Activated CD4-positive, alpha-beta T cell treated with anti-CD3 and anti-CD28 coated beads for 36 hours (primary cell): ENCODE measurements at regions of chr9 and their contacts with region 1.

Region 1: GRCh38 chr9:34178520-34179212 is at the start of gene UBAP1:
- DNase-seq: peak; percentile 98
- ATAC-seq: peak; percentile 97
- H3K4me3 Mint-ChIP-seq: peak within 1 kb of the TSS; percentile 93
- H3K27ac Mint-ChIP-seq: peak within 1 kb of the TSS; percentile 96
- H3K4me1 Mint-ChIP-seq: peaks cover 20% of the 10 kb centered on the region
- H3K27me3 Mint-ChIP-seq: no peaks in the 10 kb centered on the region
- total RNA-seq, gene UBAP1: 29.5 to 43.3 TPM

Region 2: DNA sequence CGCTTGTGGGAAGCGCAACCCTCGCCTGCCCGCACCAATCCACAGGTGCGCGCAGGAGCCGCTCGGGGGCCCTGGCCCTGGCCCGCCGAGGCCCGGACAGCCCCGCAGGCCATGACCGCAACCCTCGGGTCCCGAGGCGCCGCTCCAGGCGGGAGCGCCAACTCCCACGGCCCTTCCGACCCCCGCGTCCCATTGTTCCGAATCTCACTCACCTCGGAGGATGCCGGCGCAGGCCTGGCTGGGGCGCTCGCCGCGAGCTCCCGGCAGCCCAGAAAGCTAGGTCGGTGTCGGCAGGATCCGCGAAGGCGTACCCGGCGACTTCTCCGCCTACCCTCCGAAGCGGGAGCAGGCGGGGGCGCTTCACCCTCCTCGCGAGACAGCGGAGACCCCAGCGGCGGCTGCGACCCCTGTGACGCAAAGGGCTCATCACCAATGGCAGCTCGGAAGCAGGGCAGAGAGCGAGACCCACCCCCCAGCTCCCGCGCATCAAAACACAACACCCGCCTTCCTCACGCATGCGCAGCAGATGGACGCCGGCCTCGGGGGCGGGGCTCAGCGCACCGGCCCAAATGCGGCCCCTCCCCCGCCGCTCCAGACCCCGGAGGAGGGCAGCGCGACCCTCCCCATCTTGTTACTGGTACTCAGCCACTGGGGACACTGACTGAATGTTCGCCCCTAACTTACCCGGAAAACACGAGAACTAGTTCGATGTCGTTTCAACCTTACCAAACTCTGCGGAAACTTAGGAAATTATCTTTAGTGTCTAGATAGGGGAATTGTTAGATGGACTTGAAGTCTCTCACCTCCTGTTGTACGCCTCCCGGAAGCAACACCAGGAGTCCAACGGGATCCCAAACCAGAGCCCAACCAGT is 1627.9 kb before region 1 on chr9:
- CTCF ChIA-PET with region 1: no interaction called
- POLR2A ChIA-PET with region 1: no interaction called
- intact Hi-C with region 1: loop called in 1 of 2 experiments (anchors 10 kb)
- DNase-seq: peak; percentile 95
- ATAC-seq: peak; percentile 74
- H3K4me3 Mint-ChIP-seq: peak overlapping the region; percentile 96
- H3K27ac Mint-ChIP-seq: peak overlapping the region; percentile 99
- H3K4me1 Mint-ChIP-seq: peaks cover 47% of the 10 kb centered on the region
- H3K27me3 Mint-ChIP-seq: no peaks in the 10 kb centered on the region

Region 3: DNA sequence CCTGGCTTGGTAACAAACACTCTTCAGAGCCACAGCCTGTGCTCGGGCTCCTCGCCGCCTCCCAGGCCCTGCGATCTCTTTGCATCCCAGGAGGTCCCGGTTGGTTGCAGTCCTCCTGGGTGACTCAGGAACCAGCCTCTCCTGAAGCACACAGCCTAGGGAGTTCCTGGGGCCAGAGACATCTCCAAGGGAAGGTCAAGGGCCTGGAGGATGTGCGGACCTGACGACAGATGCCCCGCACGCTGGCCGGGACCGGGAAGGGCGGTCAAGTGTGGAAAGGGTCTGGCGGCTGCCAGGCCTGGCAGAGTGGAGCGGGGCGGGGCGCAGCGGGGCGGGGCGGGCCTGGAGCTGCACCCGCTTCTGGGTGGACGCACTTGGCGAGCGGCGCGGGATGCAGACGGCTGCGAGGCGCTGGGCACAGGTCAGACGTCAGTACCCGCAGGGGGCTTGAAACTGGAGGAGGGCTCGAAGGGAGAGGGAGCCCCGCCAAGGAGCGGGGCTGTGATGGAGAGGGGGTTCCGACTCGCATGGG is 428.3 kb before region 1 on chr9:
- CTCF ChIA-PET with region 1: no interaction called
- POLR2A ChIA-PET with region 1: no interaction called
- intact Hi-C with region 1: no loop called
- DNase-seq: peak; percentile 10
- ATAC-seq: no peak
- H3K4me3 Mint-ChIP-seq: no peak overlapping the region
- H3K27ac Mint-ChIP-seq: no peak overlapping the region
- H3K4me1 Mint-ChIP-seq: peaks cover 18% of the 10 kb centered on the region
- H3K27me3 Mint-ChIP-seq: peaks cover 61% of the 10 kb centered on the region

Region 4: DNA sequence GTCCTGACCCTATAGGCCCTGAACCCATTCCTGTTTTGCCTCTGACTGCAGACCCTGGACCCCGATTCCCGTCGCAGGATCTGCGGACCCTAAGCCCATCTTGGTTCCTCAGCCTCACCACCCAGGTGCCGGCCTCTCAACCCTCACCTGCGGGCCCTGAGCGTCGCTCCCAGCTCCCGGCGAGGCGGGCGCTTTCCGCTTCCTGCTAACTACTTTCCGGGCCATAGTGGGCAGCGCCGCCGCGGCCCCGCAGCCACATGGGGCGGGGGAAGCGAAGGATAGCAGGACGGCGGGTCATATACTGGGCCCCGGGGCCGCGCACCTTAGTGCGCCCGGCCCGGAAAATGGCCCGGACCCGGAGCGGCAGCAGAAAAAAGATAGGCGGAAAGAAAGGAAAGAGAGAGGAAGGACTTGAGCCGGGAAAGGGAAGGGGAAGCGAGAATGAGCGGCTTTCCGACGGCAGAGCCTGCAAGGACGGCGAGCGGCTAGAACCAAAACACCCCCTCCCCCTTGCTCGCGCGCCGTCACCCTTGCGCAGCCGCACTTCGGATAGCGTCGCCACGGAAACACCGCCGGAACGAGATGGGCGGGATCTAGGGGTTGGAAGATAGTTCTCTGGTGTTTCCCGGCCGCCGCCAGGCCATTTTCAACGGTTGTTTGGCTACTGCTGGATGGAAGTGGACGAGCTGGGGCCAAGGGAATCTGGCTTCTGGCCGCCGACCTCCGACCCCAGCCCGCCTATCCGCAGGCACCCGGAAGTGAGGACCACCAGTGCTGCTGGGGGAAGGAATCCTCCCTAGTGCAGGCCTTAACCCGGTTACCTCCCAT is 52.2 kb before region 1 on chr9 and contains the start of gene DCAF12:
- CTCF ChIA-PET with region 1: interaction called, 3 read pairs
- POLR2A ChIA-PET with region 1: interaction called, 7 read pairs
- intact Hi-C with region 1: loop called (anchors 1 kb)
- DNase-seq: peak; percentile 95
- ATAC-seq: peak; percentile 97
- H3K4me3 Mint-ChIP-seq: peak within 1 kb of the TSS; percentile 95
- H3K27ac Mint-ChIP-seq: peak within 1 kb of the TSS; percentile 98
- H3K4me1 Mint-ChIP-seq: peaks cover 40% of the 10 kb centered on the region
- H3K27me3 Mint-ChIP-seq: no peaks in the 10 kb centered on the region
- total RNA-seq, gene DCAF12: 34.6 to 35.0 TPM

Region 5: GRCh38 chr9:34206561-34206960 is 27.9 kb after region 1 on chr9:
- CTCF ChIA-PET with region 1: no interaction called
- POLR2A ChIA-PET with region 1: no interaction called
- intact Hi-C with region 1: loop called in 1 of 2 experiments (anchors 1 kb)
- DNase-seq: no peak
- ATAC-seq: no peak
- H3K4me3 Mint-ChIP-seq: no peak overlapping the region
- H3K27ac Mint-ChIP-seq: no peak overlapping the region
- H3K4me1 Mint-ChIP-seq: peaks cover 34% of the 10 kb centered on the region
- H3K27me3 Mint-ChIP-seq: no peaks in the 10 kb centered on the region

Region 6: DNA sequence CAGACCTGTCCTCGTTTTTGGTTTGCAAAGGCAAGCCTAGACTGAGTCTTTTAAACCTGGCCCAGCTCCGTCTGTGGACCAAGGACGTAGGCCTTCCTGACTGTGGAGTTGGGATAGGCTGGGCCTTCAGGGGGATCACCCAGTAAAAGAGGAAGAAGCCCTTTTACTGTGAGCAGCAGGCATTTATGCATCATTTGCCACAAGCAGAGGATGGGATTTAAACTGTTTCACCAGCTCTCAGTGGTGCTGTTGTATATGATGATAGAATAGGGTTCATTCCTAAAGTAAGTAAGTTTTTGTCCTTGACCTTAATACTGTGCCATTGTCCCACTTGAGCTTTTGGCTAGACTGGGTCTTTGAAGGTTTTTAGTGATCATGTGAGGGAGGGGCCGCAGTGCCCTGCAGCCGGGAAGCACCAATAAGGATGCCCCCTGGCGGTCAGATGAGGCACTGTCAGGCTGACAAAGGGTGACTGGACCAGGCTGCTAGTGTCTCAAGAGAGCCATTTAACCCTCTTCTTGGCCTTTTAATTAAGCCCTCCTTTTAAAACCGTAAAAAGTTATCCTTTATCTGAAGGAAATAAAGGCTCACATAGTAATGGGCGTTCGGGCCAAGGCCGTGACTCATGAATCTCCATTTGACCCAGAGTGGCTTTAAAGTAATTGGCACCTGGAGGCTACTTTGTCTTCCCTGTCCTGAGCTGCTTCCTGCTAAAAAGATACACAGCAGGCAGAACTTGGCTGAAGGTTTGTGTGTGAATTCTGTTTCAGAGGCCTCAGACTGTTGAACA is 74.2 kb after region 1 on chr9:
- CTCF ChIA-PET with region 1: interaction called, 4 read pairs
- POLR2A ChIA-PET with region 1: no interaction called
- intact Hi-C with region 1: loop called (anchors 1 to 2 kb)
- DNase-seq: peak; percentile 82
- ATAC-seq: peak; percentile 84
- H3K4me3 Mint-ChIP-seq: no peak overlapping the region
- H3K27ac Mint-ChIP-seq: peak overlapping the region; percentile 8
- H3K4me1 Mint-ChIP-seq: peaks cover 21% of the 10 kb centered on the region
- H3K27me3 Mint-ChIP-seq: no peaks in the 10 kb centered on the region

Region 7: DNA sequence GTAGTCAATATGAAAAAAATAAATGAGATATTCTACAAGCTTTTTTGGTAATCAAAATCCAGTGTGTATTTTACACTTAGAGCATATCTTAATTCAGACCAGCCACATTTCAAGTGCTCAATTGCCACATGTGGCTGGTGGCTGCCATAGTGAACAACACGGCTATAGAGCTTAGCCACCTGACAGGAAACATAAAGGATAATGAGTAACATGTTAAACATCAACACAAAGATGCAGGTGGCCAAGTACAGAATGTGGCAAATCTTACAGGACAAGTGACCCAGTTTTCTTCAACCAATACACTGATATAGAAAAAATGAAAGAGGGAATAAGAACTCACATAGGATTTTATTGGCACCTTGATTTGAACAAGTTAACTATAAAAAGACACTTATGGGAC is 89.0 kb after region 1 on chr9:
- CTCF ChIA-PET with region 1: no interaction called
- POLR2A ChIA-PET with region 1: no interaction called
- intact Hi-C with region 1: no loop called
- DNase-seq: no peak
- ATAC-seq: peak; percentile 51
- H3K4me3 Mint-ChIP-seq: no peak overlapping the region
- H3K27ac Mint-ChIP-seq: no peak overlapping the region
- H3K4me1 Mint-ChIP-seq: peaks cover 5% of the 10 kb centered on the region
- H3K27me3 Mint-ChIP-seq: no peaks in the 10 kb centered on the region

Region 8: DNA sequence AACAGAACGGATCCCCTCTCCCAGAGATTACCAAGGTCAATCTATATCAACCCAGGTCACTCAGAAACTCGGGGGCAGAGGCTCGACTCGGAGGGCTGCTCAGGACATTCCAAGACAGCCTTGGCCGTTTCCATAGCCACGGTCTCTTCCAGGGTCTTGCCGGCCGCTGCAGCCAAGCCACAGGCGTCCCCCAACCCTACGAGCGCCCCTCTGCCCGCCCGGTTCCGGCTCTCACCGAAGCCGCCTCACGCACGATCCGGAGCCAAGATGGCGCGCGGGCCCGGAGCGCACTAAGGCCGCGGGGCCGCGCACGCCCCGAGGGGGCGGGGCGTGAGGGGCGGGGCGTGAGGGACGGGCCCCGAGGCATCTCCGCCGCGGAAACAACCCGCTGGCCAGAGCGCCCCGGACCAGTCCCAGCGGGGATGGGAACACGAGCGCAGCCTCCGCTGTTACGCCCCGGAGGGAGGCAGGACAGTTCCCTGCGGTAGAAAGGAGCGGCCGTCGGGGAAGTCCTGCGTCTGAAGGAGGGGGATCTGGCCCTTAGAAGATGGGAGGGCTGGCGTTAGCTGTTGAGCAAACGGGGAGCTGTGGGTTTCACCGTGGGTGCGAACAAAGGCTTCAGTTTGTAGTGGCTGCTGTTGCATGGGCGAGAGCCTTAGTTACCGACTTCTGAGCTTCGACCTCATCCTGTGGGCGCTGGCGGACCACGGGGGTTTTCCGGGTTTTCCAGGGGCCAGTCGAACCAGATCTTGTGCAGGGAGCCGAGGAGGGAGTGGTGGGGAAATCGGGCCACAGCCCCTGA is 433.4 kb after region 1 on chr9 and contains the start of gene RPP25L:
- CTCF ChIA-PET with region 1: interaction called, 4 read pairs
- POLR2A ChIA-PET with region 1: no interaction called
- intact Hi-C with region 1: loop called in 1 of 2 experiments (anchors 10 kb)
- DNase-seq: peak; percentile 91
- ATAC-seq: peak; percentile 97
- H3K4me3 Mint-ChIP-seq: peak within 1 kb of the TSS; percentile 86
- H3K27ac Mint-ChIP-seq: peak within 1 kb of the TSS; percentile 93
- H3K4me1 Mint-ChIP-seq: peaks cover 16% of the 10 kb centered on the region
- H3K27me3 Mint-ChIP-seq: no peaks in the 10 kb centered on the region
- total RNA-seq, gene RPP25L: 29.3 to 35.2 TPM